Endothelial cell of umbilical vein (primary cell): ENCODE measurements at regions of chr14 and their contacts with region 1.

Region 1: GRCh38 chr14:24108336-24108874 is 6.2 kb upstream of the DCAF11 start:
- DNase-seq: no peak
- H3K4me3 ChIP-seq: no peak overlapping the region
- H3K27ac ChIP-seq: no peak overlapping the region
- H3K4me1 ChIP-seq: peaks cover 18% of the 10 kb centered on the region
- H3K27me3 ChIP-seq: no peaks in the 10 kb centered on the region
- CTCF ChIP-seq: no peak
- POLR2A ChIP-seq: no peak

Region 2: DNA sequence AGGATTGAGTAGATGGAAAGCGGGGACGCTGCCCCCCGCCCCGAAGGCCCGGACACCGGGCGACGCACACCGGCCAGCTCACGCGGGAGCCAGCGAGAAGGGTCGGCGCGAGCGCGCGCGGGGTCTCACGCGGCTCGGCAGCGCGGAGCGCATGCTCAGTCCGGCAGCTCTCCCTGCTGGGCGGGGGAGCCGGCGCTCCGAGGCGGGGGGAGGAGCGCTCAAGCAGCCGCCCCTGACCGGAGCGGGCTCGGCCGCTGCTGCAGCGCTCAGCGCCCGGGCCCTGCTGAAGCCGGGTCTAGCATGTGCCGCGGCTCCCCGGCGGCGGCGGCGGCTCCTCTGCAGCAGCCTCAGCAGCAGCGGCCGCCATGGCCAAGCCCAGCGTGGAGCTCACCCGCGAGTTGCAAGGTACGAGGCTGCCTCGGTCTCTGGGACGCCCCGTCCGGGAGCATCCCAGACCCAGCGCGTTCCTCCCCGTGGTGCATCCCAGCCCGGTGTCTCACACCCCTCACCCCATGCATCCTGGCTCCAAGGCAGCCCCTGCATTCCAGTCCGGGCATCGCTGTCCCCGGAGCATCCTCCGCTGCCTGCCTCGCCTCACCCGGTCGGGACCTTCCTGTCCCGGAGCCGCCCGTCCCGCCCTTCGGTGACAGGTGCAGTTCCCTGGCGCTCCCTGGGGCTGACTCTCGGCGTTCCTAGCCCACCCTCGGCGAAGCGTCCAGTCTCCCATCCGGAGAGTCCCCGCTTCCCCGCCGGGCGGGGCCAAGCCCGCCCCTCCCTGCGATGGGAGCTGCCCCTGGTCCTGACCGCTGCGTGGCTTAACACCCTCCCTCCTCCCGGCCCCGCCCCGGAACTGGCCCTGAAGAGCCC is 56.4 kb before region 1 on chr14 and contains the start of gene CARMIL3:
- CTCF ChIA-PET with region 1: interaction called, 420 read pairs
- POLR2A ChIA-PET with region 1: interaction called, 7 read pairs
- dilution Hi-C with region 1: no loop called
- intact Hi-C with region 1: no loop called
- DNase-seq: peak; percentile 57
- H3K4me3 ChIP-seq: peak within 1 kb of the TSS; percentile 49 to 59 (median 54)
- H3K27ac ChIP-seq: no peak within 1 kb of the TSS
- H3K4me1 ChIP-seq: peaks cover 12% of the 10 kb centered on the region
- H3K27me3 ChIP-seq: peaks cover 6 to 17% of the 10 kb centered on the region in 2 experiments
- CTCF ChIP-seq: no peak
- POLR2A ChIP-seq: no peak
- total RNA-seq, gene CARMIL3: not detected in 2 replicates

Region 3: DNA sequence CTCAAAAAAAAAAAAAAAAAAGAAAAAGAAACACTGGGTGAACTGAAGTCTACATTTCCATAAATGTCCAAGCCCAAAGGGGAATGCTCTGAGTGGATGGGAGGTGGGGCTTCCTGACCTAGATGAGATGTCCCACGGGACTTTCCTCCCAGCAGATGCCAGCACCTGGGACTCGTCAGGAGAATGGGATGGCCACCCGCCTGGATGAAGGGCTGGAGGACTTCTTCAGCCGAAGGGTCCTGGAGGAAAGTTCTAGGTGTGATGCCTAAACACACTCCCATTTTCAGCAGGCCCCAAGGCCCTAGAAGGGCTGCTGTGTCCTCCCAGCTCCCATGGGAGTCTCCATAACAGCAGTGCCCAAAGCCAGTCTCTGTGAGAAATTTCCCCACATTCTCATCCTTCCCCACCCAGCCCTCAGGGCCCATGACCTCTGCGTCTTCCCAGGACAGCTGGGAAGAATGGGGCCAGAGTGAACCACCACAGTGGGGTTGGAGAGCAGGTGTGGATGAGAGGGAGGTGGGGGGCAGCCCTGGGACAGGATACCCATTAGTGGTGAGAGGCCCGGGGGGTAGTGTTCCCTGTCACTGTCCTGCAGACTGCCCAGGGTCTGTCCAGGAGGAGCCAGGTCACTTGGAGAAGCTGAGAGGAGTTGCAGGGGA is 44.2 kb before region 1 on chr14:
- CTCF ChIA-PET with region 1: interaction called, 420 read pairs
- POLR2A ChIA-PET with region 1: no interaction called
- dilution Hi-C with region 1: no loop called
- intact Hi-C with region 1: no loop called
- DNase-seq: no peak
- H3K4me3 ChIP-seq: no peak overlapping the region
- H3K27ac ChIP-seq: no peak overlapping the region
- H3K4me1 ChIP-seq: no peaks in the 10 kb centered on the region
- H3K27me3 ChIP-seq: peaks cover 0 to 1% of the 10 kb centered on the region in 2 experiments
- CTCF ChIP-seq: no peak
- POLR2A ChIP-seq: no peak

Region 4: GRCh38 chr14:24080888-24081738 is 27.3 kb before region 1 on chr14:
- CTCF ChIA-PET with region 1: interaction called, 18 read pairs
- POLR2A ChIA-PET with region 1: no interaction called
- dilution Hi-C with region 1: no loop called
- intact Hi-C with region 1: no loop called
- DNase-seq: peak; percentile 7
- H3K4me3 ChIP-seq: peak overlapping the region; percentile 1 to 31 (median 25)
- H3K27ac ChIP-seq: no peak overlapping the region
- H3K4me1 ChIP-seq: no peaks in the 10 kb centered on the region
- H3K27me3 ChIP-seq: peaks cover 28 to 35% of the 10 kb centered on the region in 2 experiments
- CTCF ChIP-seq: no peak
- POLR2A ChIP-seq: no peak

Region 5: DNA sequence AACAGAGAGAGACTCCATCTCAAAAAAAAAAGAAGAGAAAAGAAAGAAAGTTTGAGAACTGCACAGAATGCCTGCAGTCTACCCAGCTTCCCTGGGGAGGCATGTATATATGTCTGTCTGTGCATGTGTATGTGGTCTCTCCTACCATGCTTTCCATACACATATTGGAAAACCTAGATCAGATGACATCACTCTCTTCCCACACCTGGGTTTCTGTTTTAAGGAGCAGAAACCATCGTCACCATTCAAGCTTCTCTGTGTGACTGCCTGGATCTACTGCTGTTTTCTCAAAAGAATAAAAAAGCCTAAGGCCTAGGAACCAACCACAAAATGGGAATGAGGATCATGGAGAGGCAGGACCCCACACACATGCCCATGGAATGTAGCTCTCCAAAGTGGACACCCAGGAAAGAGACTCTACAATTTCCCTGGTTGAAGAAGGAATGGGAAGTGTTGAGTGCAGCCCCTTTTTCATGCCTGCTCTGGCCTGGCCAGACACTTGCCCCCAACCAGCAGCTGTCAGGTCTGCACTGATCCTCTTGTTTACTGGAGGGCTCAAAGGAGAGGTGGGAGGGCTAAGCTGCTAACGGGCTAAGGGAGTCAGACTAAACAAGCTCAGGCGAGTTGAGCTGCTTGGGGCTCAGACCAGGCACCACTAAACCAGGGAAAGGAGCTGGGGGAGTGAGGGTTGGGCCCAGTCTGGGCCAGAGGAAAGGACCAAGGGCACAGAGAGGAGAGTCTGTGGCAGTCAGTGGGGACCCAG is 22.0 kb before region 1 on chr14:
- CTCF ChIA-PET with region 1: interaction called, 126 read pairs
- POLR2A ChIA-PET with region 1: no interaction called
- dilution Hi-C with region 1: no loop called
- intact Hi-C with region 1: no loop called
- DNase-seq: no peak
- H3K4me3 ChIP-seq: no peak overlapping the region
- H3K27ac ChIP-seq: no peak overlapping the region
- H3K4me1 ChIP-seq: no peaks in the 10 kb centered on the region
- H3K27me3 ChIP-seq: peaks cover 14 to 20% of the 10 kb centered on the region in 2 experiments
- CTCF ChIP-seq: no peak
- POLR2A ChIP-seq: no peak

Region 6: GRCh38 chr14:24093901-24094761 is 14.3 kb before region 1 on chr14 and contains the start of gene PCK2:
- CTCF ChIA-PET with region 1: interaction called, 126 read pairs
- POLR2A ChIA-PET with region 1: interaction called, 4 read pairs
- dilution Hi-C with region 1: no loop called
- intact Hi-C with region 1: loop called (anchors 1 kb)
- DNase-seq: peak; percentile 72
- H3K4me3 ChIP-seq: peak within 1 kb of the TSS; percentile 71 to 82 (median 74)
- H3K27ac ChIP-seq: peak within 1 kb of the TSS; percentile 46
- H3K4me1 ChIP-seq: peaks cover 9% of the 10 kb centered on the region
- H3K27me3 ChIP-seq: no peaks in the 10 kb centered on the region
- CTCF ChIP-seq: peak in 1 of 2 donors; percentile 9
- POLR2A ChIP-seq: peak; percentile 77
- total RNA-seq, gene PCK2: 24.5 and 25.1 TPM in 2 replicates

Region 7: DNA sequence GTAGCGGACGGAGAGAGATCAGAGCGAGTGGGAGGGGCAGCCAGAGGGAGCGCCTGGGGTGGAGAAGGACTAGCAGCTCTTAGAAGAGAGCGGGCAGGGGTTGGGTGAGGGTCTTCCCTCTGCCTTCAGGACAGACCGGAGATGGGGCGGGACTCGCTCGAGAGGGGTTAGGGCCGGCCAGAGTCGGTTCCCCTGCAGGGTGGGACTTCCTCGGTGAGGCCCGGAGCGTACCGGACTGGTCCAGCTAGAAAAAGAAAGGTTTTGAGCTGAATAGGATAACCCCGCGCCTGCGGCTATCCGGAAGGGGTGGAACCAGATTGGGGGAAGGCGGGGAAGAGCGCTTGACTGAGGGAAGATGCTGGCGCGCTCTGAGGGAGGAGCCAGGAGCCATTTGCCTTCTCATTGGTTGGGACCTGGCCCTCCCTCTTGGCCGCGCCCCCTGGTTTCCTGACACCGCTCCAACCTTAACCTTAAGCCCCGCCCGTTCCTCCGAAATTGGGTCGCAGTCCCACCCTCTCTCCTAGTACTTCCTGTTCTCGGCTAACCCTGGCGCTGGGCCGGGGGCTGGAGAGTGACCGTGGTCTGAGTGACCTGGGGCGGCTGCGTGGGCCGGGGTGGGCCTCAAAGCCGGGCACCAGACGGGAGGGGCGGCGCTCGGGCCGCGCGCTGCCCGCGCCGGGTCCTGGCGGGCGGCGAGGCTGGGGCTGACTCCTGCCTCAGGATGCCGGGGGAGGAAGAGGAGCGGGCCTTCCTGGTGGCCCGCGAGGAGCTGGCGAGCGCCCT is 38.8 kb after region 1 on chr14 and contains the start of gene RNF31:
- CTCF ChIA-PET with region 1: interaction called, 14 read pairs
- POLR2A ChIA-PET with region 1: no interaction called
- dilution Hi-C with region 1: no loop called
- intact Hi-C with region 1: no loop called
- DNase-seq: peak; percentile 97
- H3K4me3 ChIP-seq: peak within 1 kb of the TSS; percentile 59 to 86 (median 79)
- H3K27ac ChIP-seq: peak within 1 kb of the TSS; percentile 52
- H3K4me1 ChIP-seq: peaks cover 17% of the 10 kb centered on the region
- H3K27me3 ChIP-seq: no peaks in the 10 kb centered on the region
- CTCF ChIP-seq: no peak
- POLR2A ChIP-seq: peak; percentile 75
- total RNA-seq, gene RNF31: 66.5 and 69.7 TPM in 2 replicates

Region 8: GRCh38 chr14:24262821-24263761 is 154.7 kb after region 1 on chr14 and contains the start of gene TGM1:
- CTCF ChIA-PET with region 1: no interaction called
- POLR2A ChIA-PET with region 1: no interaction called
- dilution Hi-C with region 1: no loop called
- intact Hi-C with region 1: no loop called
- DNase-seq: no peak
- H3K4me3 ChIP-seq: no peak within 1 kb of the TSS
- H3K27ac ChIP-seq: no peak within 1 kb of the TSS
- H3K4me1 ChIP-seq: no peaks in the 10 kb centered on the region
- H3K27me3 ChIP-seq: no peaks in the 10 kb centered on the region
- CTCF ChIP-seq: no peak
- POLR2A ChIP-seq: no peak
- total RNA-seq, gene TGM1: 3.4 and 3.9 TPM in 2 replicates